ENCODE measurements at regions of chr12 and their contacts with region 1.

Region 1: DNA sequence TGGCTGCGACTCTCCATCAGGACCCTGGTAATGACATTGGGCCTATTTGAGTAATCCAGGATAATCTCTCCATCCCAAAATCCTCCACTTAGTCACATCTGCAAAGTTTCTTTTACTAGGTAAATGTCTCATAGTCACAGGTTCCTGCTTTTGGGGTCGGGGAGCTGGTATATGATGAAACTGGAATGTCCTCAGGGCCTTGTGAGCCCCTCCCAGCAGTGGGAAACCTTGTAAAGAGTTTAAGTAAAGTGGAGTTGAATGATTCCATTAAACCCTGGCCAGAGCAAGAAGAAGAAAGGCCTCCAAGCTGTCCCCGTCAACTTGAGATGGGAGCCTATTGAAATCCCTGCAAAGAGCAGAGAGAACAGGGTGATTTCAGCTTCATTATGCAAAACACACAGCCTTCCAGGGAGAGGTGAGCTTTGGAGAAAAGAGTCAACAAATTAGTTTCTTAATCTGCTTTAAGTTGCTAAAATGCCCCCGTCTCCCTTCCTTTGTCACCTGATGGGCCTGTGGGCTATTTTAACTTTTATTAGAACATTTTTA is 12.6 kb downstream of the WSCD2 start:
- DNase-seq: no peak
- H3K4me3 ChIP-seq: no peak overlapping the region
- CTCF ChIP-seq: no peak

Region 2: GRCh38 chr12:108087900-108088299 is 53.8 kb before region 1 on chr12:
- in situ Hi-C with region 1: loop called (anchors 5 kb)
- DNase-seq: no peak
- H3K4me3 ChIP-seq: no peak overlapping the region
- CTCF ChIP-seq: no peak

Region 3: DNA sequence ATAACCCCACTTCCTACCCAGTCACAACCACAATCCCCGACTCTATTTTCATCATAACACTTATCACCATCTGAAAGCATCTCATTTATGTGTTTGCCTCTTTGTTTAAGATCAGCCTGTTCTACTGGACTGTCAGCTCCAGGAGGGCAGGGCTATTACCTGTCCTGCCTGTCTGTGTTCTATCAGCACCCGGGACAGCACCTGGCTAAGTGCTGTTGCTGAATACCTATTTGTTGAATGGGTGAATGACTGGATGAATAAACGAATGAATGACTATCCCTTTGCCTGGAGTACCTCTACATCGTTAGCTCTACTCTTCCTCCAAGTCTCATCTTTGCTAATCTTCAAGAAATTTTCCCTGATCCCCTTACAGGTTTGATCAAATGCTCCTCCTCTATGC is 56.4 kb after region 1 on chr12:
- in situ Hi-C with region 1: loop called (anchors 5 kb)
- DNase-seq: no peak
- H3K4me3 ChIP-seq: no peak overlapping the region
- CTCF ChIP-seq: no peak